Posterior cingulate gyrus (tissue), 11 donors: ENCODE measurements at regions of chr6 and their contacts with region 1.

Region 1: DNA sequence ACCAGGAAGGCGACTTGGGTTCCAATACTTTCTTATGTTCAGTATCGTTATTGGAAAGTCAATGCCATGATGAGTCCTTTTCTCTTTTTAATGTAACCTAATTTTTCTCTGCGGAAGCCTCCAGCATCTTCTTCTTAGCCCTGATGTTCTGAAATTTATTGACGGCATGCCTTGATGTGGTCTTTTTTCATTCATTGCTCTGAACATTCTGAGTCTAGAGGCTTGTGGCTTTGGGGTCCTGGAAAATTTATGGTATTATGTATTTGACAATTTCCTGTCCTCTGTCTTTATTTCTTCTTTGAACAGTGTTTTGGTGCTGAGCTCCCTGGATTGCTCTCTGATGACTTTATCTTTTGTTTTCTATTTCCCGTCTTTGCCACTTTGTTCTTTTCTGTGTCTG is 28.7 kb upstream of the MAS1 start:
- DNase-seq: no peak

Region 2: GRCh38 chr6:159941286-159942113 is 79.4 kb after region 1 on chr6:
- intact Hi-C with region 1: loop called (anchors 2 kb)
- DNase-seq: no peak

Region 3: GRCh38 chr6:160000280-160000704 is 138.2 kb after region 1 on chr6:
- intact Hi-C with region 1: no loop called
- DNase-seq: peak in 1 of 10 donors; percentile 75

Region 4: GRCh38 chr6:160088069-160088783 is 226.1 kb after region 1 on chr6:
- intact Hi-C with region 1: loop called (anchors 10 kb)
- DNase-seq: peak in 9 of 10 donors; percentile 21 to 92 (median 66)

Region 5: DNA sequence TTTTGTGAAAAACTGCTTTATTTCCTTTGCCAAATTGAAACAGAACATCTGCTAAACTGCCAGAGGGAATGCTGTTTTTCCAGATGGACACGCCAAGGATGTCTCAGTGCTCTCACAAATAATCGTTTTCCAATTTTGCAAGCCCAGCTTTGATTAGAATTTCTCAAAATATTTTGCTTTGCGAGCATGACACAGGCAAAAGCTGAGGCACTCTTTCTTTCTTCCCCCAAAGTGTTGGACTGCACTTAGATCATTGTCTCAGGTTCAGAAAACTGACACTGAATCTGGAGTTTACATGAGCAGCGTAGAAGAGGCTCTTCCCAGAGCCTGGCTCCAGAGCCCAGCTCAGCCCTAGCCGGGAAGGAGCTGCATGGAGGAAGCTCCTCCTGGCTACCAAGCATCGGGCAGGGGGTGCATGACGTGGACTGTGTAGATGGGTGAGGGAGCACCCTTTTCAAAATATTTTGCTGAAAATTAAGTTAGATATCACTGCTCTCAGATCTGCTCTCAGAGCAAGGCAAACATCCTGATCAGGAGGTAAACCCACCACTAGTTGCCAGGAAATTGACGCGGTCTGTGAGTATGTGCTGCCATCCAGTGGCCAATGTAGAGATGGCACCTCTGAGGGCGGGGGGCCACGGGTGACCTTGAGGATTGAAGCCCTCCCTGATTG is 593.6 kb after region 1 on chr6:
- intact Hi-C with region 1: loop called (anchors 1 kb)
- DNase-seq: peak; percentile 40 to 94 (median 72)

Region 6: GRCh38 chr6:160899671-160900430 is 1037.7 kb after region 1 on chr6:
- intact Hi-C with region 1: no loop called
- DNase-seq: no peak